CD4-positive, alpha-beta memory T cell (primary cell): ENCODE measurements at regions of chr17 and their contacts with region 1.

Region 1: GRCh38 chr17:64145757-64146417 is 15.9 kb upstream of the ERN1 start:
- DNase-seq: peak; percentile 95 to 99 (median 97)
- H3K4me3 ChIP-seq: peak overlapping the region; percentile 77 to 95
- H3K4me3 Mint-ChIP-seq: no peak overlapping the region
- H3K27ac ChIP-seq: peak overlapping the region; percentile 87
- H3K27ac Mint-ChIP-seq: no peak overlapping the region
- H3K4me1 ChIP-seq: peaks cover 22% of the 10 kb centered on the region
- H3K4me1 Mint-ChIP-seq: peaks cover 15 to 30% (median 21%) of the 10 kb centered on the region in 4 donors
- H3K27me3 ChIP-seq: no peaks in the 10 kb centered on the region
- H3K27me3 Mint-ChIP-seq: no peaks in the 10 kb centered on the region

Region 2: GRCh38 chr17:63455417-63455816 is 690.5 kb before region 1 on chr17:
- CTCF ChIA-PET with region 1: no interaction called
- POLR2A ChIA-PET with region 1: no interaction called
- intact Hi-C with region 1: no loop called
- DNase-seq: no peak
- H3K4me3 ChIP-seq: no peak overlapping the region
- H3K4me3 Mint-ChIP-seq: no peak overlapping the region
- H3K27ac ChIP-seq: no peak overlapping the region
- H3K27ac Mint-ChIP-seq: peak overlapping the region in 1 of 7 donors; percentile 4
- H3K4me1 ChIP-seq: peaks cover 4% of the 10 kb centered on the region
- H3K4me1 Mint-ChIP-seq: peaks cover under 1 to 3% (median 3%) of the 10 kb centered on the region in 4 donors
- H3K27me3 ChIP-seq: no peaks in the 10 kb centered on the region
- H3K27me3 Mint-ChIP-seq: peaks cover 0 to 2% of the 10 kb centered on the region in 2 donors

Region 3: GRCh38 chr17:63842540-63843386 is 303.1 kb before region 1 on chr17 and contains the start of gene SMARCD2:
- CTCF ChIA-PET with region 1: no interaction called
- POLR2A ChIA-PET with region 1: interaction called, 14 read pairs
- intact Hi-C with region 1: no loop called
- DNase-seq: peak; percentile 97 to 98 (median 98)
- H3K4me3 ChIP-seq: peak within 1 kb of the TSS; percentile 58 to 72
- H3K4me3 Mint-ChIP-seq: peak within 1 kb of the TSS; percentile 86 to 97 (median 94)
- H3K27ac ChIP-seq: peak within 1 kb of the TSS; percentile 84
- H3K27ac Mint-ChIP-seq: peak within 1 kb of the TSS; percentile 87 to 96 (median 95)
- H3K4me1 ChIP-seq: peaks cover 48% of the 10 kb centered on the region
- H3K4me1 Mint-ChIP-seq: peaks cover 17 to 57% (median 35%) of the 10 kb centered on the region in 4 donors
- H3K27me3 ChIP-seq: no peaks in the 10 kb centered on the region
- H3K27me3 Mint-ChIP-seq: no peaks in the 10 kb centered on the region
- total RNA-seq, gene SMARCD2: 113 to 114 TPM

Region 4: GRCh38 chr17:63946440-63947367 is 199.2 kb before region 1 on chr17:
- CTCF ChIA-PET with region 1: interaction called, 3 read pairs
- POLR2A ChIA-PET with region 1: interaction called, 10 read pairs
- intact Hi-C with region 1: no loop called
- DNase-seq: peak; percentile 59 to 69 (median 64)
- H3K4me3 ChIP-seq: peak overlapping the region; percentile 6 to 31
- H3K4me3 Mint-ChIP-seq: peak overlapping the region; percentile 41 to 87 (median 78)
- H3K27ac ChIP-seq: no peak overlapping the region
- H3K27ac Mint-ChIP-seq: peak overlapping the region in 6 of 7 donors; percentile 57 to 88 (median 71)
- H3K4me1 ChIP-seq: peaks cover 22% of the 10 kb centered on the region
- H3K4me1 Mint-ChIP-seq: peaks cover 4 to 31% (median 19%) of the 10 kb centered on the region in 4 donors
- H3K27me3 ChIP-seq: no peaks in the 10 kb centered on the region
- H3K27me3 Mint-ChIP-seq: no peaks in the 10 kb centered on the region

Region 5: DNA sequence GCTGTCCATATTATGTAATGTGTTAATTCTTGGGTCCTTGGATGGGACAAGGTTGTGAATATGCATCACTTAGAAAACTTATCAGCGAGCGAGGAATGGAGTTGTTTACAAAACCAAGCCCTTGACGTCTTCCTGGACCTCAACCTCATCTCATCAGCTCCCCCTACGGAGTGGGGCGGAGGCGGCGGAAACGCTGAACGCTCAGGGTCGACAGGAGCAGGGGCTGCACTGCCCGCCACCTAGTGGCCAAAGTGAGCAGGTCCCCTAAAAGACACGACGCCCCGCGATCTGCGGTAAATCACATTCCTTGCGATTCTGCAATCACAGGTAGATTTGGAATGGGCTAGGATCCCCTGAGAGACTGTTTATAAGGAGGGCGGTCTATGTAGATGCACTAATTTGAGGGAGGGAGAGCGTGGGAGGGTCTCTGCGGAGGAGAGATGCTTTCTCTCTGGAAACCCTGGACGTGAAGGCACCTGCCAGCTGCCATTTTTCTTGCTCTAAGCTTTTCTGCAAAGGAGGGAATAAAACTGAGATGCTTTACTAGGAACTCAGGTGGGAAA is 120.1 kb before region 1 on chr17:
- CTCF ChIA-PET with region 1: interaction called, 19 read pairs
- POLR2A ChIA-PET with region 1: interaction called, 99 read pairs
- intact Hi-C with region 1: no loop called
- DNase-seq: peak; percentile 95 to 98 (median 96)
- H3K4me3 ChIP-seq: peak overlapping the region in 1 of 2 donors; percentile 43
- H3K4me3 Mint-ChIP-seq: peak overlapping the region; percentile 71 to 94 (median 87)
- H3K27ac ChIP-seq: peak overlapping the region; percentile 89
- H3K27ac Mint-ChIP-seq: peak overlapping the region; percentile 94 to 99 (median 98)
- H3K4me1 ChIP-seq: peaks cover 80% of the 10 kb centered on the region
- H3K4me1 Mint-ChIP-seq: peaks cover 42 to 75% (median 59%) of the 10 kb centered on the region in 4 donors
- H3K27me3 ChIP-seq: no peaks in the 10 kb centered on the region
- H3K27me3 Mint-ChIP-seq: no peaks in the 10 kb centered on the region

Region 6: DNA sequence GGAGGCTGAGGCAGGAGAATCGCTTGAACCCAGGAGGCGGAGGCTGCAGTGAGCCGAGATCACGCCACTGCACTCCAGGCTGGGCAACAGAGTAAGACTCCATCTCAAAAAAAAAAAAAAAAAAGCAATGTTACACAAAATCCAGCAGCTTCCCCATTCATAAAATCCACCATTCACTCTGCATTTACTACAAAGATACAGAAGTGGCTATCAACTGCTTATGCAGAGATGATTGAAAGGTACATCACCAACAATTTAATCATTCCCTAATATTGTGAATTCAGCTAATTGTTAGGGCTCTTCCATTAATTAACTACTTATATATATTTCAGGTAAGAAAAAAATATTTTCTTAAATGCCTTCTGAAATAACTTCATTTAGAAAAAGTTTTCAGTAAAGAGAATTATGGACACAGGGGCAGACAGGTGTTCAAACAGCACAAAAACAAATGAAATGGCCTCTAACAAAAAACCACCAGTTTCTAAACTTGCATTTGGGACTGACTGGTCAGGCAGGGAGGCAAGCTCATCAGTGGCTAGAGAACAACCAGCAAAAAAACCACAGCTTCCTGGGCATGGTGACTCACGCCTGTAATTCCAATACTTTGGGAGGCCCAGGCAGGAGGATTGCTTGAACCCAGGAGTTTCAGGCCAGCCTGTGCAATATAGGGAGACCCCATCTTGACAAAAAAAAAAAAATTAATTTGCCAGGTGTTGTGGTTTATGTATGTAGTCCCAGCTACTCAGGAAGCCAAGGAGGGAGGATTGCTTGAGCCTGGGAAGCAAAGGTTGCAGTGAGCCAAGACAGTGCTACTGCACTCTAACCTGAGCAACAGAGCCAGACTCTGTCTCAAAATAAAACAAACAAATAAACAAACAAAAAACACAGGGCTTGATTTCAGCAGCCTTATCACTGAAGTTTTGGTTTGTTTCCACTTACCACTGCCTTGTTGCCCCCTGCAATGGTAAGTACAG is 42.2 kb before region 1 on chr17:
- CTCF ChIA-PET with region 1: no interaction called
- POLR2A ChIA-PET with region 1: interaction called, 11 read pairs
- intact Hi-C with region 1: no loop called
- DNase-seq: no peak
- H3K4me3 ChIP-seq: no peak overlapping the region
- H3K4me3 Mint-ChIP-seq: peak overlapping the region in 7 of 8 donors; percentile 7 to 65 (median 21)
- H3K27ac ChIP-seq: no peak overlapping the region
- H3K27ac Mint-ChIP-seq: peak overlapping the region in 5 of 7 donors; percentile 12 to 73 (median 36)
- H3K4me1 ChIP-seq: peaks cover 75% of the 10 kb centered on the region
- H3K4me1 Mint-ChIP-seq: peaks cover 52 to 92% (median 74%) of the 10 kb centered on the region in 4 donors
- H3K27me3 ChIP-seq: no peaks in the 10 kb centered on the region
- H3K27me3 Mint-ChIP-seq: no peaks in the 10 kb centered on the region

Region 7: DNA sequence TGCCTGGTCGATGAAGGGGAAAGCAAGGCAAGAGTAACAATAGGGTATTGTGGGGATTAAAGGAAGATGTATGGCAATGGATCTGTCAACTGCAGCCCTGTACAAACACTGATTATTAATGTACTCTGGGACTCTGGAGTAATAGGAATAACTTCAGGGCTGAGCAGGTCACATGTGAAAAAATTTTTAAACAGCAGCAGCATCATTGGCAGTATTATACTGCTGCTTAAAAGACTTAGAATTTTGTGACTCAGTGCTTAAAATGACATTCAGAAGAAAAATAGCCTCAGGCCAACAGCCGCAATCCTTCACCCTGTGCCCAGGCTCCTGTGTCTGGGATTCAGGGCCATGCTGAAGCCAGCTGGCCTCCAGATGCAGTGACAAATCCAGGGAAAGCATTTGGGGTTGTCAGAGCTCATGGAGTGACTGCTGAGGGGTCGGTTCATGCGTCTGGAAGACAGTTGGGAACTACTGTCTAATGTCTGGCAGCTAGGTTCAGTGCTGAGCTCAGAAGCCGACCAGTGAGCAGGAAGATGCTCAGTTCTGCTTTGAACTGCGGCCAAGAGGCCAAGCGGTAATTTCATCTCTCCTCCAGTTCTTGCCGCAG is 95.0 kb after region 1 on chr17:
- CTCF ChIA-PET with region 1: no interaction called
- POLR2A ChIA-PET with region 1: no interaction called
- intact Hi-C with region 1: no loop called
- DNase-seq: no peak
- H3K4me3 ChIP-seq: no peak overlapping the region
- H3K4me3 Mint-ChIP-seq: no peak overlapping the region
- H3K27ac ChIP-seq: no peak overlapping the region
- H3K27ac Mint-ChIP-seq: no peak overlapping the region
- H3K4me1 ChIP-seq: no peaks in the 10 kb centered on the region
- H3K4me1 Mint-ChIP-seq: peaks cover 4 to 19% (median 8%) of the 10 kb centered on the region in 4 donors
- H3K27me3 ChIP-seq: no peaks in the 10 kb centered on the region
- H3K27me3 Mint-ChIP-seq: no peaks in the 10 kb centered on the region

Region 8: GRCh38 chr17:64262417-64263260 is 116.8 kb after region 1 on chr17 and contains the start of gene TEX2:
- CTCF ChIA-PET with region 1: no interaction called
- POLR2A ChIA-PET with region 1: interaction called, 48 read pairs
- intact Hi-C with region 1: loop called (anchors 1 kb)
- DNase-seq: peak; percentile 70 to 86 (median 73)
- H3K4me3 ChIP-seq: peak within 1 kb of the TSS; percentile 76 to 79
- H3K4me3 Mint-ChIP-seq: peak within 1 kb of the TSS; percentile 91 to 98 (median 95)
- H3K27ac ChIP-seq: peak within 1 kb of the TSS; percentile 74
- H3K27ac Mint-ChIP-seq: peak within 1 kb of the TSS; percentile 93 to 98 (median 96)
- H3K4me1 ChIP-seq: peaks cover 33% of the 10 kb centered on the region
- H3K4me1 Mint-ChIP-seq: peaks cover 21 to 46% (median 34%) of the 10 kb centered on the region in 4 donors
- H3K27me3 ChIP-seq: no peaks in the 10 kb centered on the region
- H3K27me3 Mint-ChIP-seq: peaks cover 0 to 9% of the 10 kb centered on the region in 2 donors
- total RNA-seq, gene TEX2: 12.6 to 13.1 TPM